ENCODE measurements at regions of chr2 and their contacts with region 1.

Region 1: GRCh38 chr2:26846328-26847306 is 1.3 kb upstream of the DPYSL5 start:
- DNase-seq: peak; percentile 83
- CTCF ChIP-seq: peak; percentile 78

Region 2: GRCh38 chr2:26455037-26455669 is 391.5 kb before region 1 on chr2:
- CTCF ChIA-PET with region 1: no interaction called
- POLR2A ChIA-PET with region 1: no interaction called
- DNase-seq: no peak
- CTCF ChIP-seq: no peak

Region 3: GRCh38 chr2:26861610-26862224 is 15.1 kb after region 1 on chr2:
- CTCF ChIA-PET with region 1: interaction called, 21 read pairs
- POLR2A ChIA-PET with region 1: no interaction called
- DNase-seq: no peak
- CTCF ChIP-seq: no peak

Region 4: GRCh38 chr2:26922405-26923188 is 76.0 kb after region 1 on chr2:
- CTCF ChIA-PET with region 1: interaction called, 23 read pairs
- POLR2A ChIA-PET with region 1: no interaction called
- DNase-seq: peak; percentile 71
- CTCF ChIP-seq: peak; percentile 44

Region 5: GRCh38 chr2:26951236-26951635 is 104.6 kb after region 1 on chr2:
- CTCF ChIA-PET with region 1: interaction called, 11 read pairs
- POLR2A ChIA-PET with region 1: no interaction called
- DNase-seq: no peak
- CTCF ChIP-seq: no peak

Region 6: DNA sequence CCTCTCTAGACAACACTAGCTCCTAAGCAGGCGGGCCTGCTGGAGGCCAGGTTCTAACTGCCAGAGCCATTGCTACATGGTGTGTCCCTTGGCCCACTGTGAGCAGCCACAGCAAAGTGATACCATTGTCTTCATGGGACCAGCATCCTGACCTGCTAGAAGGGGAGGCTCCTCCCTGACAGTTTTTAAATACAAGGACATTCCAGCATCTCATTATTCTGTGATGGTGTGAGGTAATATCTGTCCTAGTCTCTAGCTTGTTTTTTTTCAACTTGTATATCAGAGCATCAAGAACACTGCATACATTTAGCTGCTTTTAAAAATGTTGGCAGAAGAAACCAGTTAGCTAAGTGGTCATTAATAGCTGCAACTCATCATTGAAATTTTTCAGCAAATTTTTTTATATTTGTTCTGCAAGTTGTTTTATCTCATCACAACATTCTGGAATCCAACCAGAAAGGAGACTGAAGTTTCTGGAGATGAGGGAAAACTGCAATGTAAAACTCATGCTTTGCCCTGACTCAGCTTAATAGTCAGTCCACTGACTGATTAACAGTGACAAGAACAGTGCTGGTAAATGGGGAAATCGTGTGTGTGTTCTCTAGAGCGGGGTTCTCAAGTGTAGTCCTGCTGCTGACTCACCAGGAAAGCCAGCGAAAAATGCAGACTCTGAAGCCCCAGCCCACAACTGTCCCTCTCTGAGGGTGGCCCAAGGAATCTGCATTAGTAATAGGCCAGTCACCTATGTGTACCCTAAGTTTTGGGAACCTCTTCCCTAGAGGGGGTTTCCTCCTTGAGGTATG is 141.6 kb after region 1 on chr2:
- CTCF ChIA-PET with region 1: interaction called, 11 read pairs
- POLR2A ChIA-PET with region 1: no interaction called
- DNase-seq: no peak
- CTCF ChIP-seq: no peak

Region 7: DNA sequence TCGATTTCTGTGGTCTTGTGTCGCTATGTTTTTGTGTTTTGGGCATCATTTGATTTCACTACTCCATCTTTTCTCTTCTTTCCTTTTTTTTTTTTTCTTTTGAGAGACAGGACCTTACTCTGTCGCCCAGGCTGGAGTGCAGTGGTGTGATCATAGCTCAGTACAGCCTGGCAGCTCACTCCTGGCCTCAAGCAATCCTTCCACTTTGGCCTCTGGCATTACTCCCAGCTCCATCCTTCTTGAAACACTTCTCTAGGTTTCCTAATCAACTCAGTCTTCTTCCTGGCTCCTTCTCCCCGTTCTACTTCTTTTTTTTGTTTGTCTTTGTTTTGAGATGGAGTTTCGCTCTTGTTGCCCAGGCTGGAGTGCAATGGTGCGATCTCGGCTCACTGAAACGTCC is 328.7 kb after region 1 on chr2:
- CTCF ChIA-PET with region 1: no interaction called
- POLR2A ChIA-PET with region 1: no interaction called
- DNase-seq: no peak
- CTCF ChIP-seq: no peak

Measured in GM10248 (cell line).